ENCODE measurements at regions of chr5 and their contacts with region 1.

Region 1: DNA sequence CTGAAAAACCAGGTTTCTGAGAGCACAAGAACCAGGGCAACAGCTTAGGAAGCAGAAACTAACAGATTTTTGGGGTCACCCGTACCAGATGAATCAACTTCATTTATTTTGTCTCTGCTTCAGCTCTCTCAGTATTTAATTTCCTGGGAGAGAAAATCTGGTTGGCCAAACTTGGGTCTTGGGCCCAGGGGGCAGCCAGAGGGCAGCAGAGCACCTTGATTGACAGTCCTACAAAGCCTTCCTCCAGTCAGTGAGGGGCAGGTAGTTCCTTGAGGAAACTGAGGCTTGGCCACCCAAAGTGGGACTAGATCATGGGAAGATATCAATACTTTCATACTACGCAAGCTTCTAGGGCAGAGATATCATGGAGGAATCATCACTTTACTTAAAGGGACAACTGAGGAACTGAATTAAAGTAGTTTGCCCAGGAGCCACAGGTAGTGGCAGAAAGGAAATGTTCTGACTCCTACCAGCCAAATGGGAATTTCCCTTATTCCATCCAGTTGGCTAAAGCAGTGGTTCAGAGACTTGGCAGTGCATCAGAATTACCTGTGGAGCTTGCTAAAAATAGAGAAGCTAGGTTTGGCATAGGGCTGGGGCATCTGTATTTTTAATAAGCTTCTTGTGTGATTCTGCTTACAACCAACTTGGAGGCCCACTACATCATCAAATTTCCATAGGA is 21.5 kb upstream of the ARHGAP26 start:
- DNase-seq: peak; percentile 23 to 25
- ATAC-seq: peak in 4 of 8 donors; percentile 27 to 42 (median 33)
- H3K4me3 ChIP-seq: no peak overlapping the region
- H3K27ac ChIP-seq: peak overlapping the region in 2 of 10 donors; percentile 15 to 22
- H3K4me1 ChIP-seq: peaks cover 6 to 76% (median 55%) of the 10 kb centered on the region in 9 donors
- H3K27me3 ChIP-seq: no peaks in the 10 kb centered on the region
- CTCF ChIP-seq: peak; percentile 22 to 68 (median 54)

Region 2: DNA sequence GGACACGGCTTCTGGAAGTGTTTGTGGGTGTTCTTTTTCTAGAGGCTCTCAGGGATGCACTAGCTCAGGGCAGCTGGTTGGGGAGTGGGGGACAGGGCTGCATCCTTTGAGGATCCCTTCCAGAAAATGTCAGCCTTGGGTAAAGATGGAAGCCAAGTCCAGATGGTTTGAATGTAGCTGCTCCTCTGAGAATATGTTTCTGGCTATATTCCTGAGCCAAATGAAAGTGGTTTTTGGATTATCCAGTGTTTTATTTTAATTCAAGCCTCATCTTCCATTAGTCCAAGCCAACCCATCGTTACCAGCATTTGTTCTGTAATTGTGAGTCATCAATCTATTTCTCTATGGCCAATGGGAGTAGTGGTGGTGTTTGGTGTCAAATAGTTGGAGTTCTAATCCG is 494.3 kb before region 1 on chr5:
- intact Hi-C with region 1: no loop called
- DNase-seq: no peak
- ATAC-seq: peak in 6 of 8 donors; percentile 12 to 72 (median 45)
- H3K4me3 ChIP-seq: no peak overlapping the region
- H3K27ac ChIP-seq: peak overlapping the region in 3 of 10 donors; percentile 3 to 53 (median 48)
- H3K4me1 ChIP-seq: peaks cover 0 to 12% (median 0%) of the 10 kb centered on the region in 9 donors
- H3K27me3 ChIP-seq: no peaks in the 10 kb centered on the region
- CTCF ChIP-seq: no peak

Region 3: DNA sequence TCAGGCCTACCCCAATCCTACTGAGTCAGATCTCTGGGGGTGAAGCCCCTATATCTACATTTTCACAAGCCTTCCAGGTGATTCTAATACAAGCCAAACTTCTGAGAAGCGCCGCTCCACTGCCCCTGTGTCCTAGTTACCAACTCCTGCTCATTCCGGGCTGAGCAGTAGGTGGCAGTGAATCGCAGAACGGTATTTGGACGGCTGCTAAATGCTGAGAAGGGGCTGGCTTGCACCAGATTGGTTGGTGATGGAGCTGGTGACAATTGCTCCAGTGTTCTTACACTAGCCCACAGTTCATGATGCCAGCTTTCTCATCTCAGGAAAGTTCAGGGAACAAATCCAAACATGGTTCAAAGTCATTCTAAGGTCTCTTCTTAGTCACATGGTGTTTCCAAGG is 31.7 kb before region 1 on chr5:
- intact Hi-C with region 1: loop called in 1 of 10 experiments (anchors 5 kb)
- DNase-seq: peak; percentile 38 to 62
- ATAC-seq: peak; percentile 21 to 72 (median 61)
- H3K4me3 ChIP-seq: peak overlapping the region in 1 of 10 donors; percentile 22
- H3K27ac ChIP-seq: peak overlapping the region; percentile 13 to 82 (median 68)
- H3K4me1 ChIP-seq: peaks cover 6 to 54% (median 34%) of the 10 kb centered on the region in 9 donors
- H3K27me3 ChIP-seq: no peaks in the 10 kb centered on the region
- CTCF ChIP-seq: peak in 7 of 9 donors; percentile 32 to 64 (median 43)

Region 4: GRCh38 chr5:142874537-142874936 is 125.8 kb after region 1 on chr5:
- intact Hi-C with region 1: loop called in 4 of 10 experiments (anchors 10 kb)
- DNase-seq: peak; percentile 85 to 88
- ATAC-seq: peak; percentile 27 to 79 (median 69)
- H3K4me3 ChIP-seq: no peak overlapping the region
- H3K27ac ChIP-seq: peak overlapping the region in 8 of 10 donors; percentile 19 to 73 (median 50)
- H3K4me1 ChIP-seq: peaks cover 21 to 78% (median 64%) of the 10 kb centered on the region in 9 donors
- H3K27me3 ChIP-seq: no peaks in the 10 kb centered on the region
- CTCF ChIP-seq: no peak

Region 5: GRCh38 chr5:142881076-142881783 is 132.5 kb after region 1 on chr5:
- intact Hi-C with region 1: loop called in 5 of 10 experiments (anchors 2 to 10 kb)
- DNase-seq: no peak
- ATAC-seq: peak in 5 of 8 donors; percentile 2 to 35 (median 13)
- H3K4me3 ChIP-seq: no peak overlapping the region
- H3K27ac ChIP-seq: peak overlapping the region in 9 of 10 donors; percentile 0 to 84 (median 58)
- H3K4me1 ChIP-seq: peaks cover 15 to 66% (median 53%) of the 10 kb centered on the region in 9 donors
- H3K27me3 ChIP-seq: no peaks in the 10 kb centered on the region
- CTCF ChIP-seq: no peak

Measured in heart right ventricle (tissue), 16 donors.